ENCODE measurements at regions of chr7 and their contacts with region 1.

Region 1: GRCh38 chr7:98841179-98841997 is 28.4 kb downstream of the TMEM130 start:
- DNase-seq: peak; percentile 23
- H3K4me3 ChIP-seq: no peak overlapping the region
- H3K27ac ChIP-seq: no peak overlapping the region
- H3K4me1 ChIP-seq: no peaks in the 10 kb centered on the region
- H3K27me3 ChIP-seq: no peaks in the 10 kb centered on the region
- CTCF ChIP-seq: peak; percentile 96

Region 2: DNA sequence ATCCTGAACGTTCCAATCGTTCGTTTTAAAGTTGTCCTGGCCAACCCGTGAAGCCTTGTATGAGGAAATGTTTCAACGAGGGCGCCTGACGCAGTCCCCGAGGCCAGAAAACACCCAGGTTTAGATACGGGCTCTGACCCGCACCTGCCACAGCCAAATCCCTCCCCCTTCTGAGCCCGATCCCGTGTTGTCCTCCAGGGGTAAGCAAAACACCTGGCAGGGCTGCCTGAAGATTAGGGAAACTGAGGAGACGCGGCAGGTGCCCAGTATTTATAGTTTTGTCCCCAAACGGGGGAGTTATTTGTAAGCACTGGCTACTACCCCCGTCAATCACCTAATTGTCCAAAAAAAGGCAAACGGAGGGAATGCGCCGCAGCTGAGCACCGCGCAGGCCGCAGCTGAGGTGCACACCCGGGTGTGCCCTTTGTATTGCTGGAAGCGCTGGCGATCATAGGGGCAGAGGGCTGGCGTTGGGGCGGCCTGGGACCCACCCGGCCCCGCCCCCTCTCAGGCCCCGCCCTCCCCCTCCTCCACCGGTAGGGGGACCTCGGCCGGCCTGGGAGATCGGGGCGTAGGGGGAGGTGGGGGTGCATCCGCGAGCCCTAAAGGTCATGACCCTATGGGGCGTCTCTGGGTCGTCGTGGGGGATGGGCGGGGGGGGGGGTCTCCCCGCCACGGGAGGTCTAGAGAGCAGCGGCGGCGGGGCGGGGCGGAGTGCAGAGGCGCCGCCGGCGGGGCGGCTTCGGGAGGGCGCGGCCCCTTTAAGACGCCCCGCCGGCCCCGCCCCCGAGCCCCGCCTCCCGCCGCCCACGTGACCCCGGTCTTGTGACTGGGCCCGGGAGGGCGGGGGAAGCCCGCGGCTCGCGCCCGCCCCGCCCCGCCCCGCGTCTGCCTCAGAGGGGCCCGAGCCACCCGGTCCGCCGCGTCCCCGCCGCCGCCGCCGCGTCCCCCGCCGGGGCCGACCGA is 560.3 kb before region 1 on chr7 and contains the start of gene BRI3:
- CTCF ChIA-PET with region 1: no interaction called
- dilution Hi-C with region 1: no loop called
- in situ Hi-C with region 1: loop called (anchors 25 kb)
- intact Hi-C with region 1: no loop called
- DNase-seq: peak; percentile 78
- H3K4me3 ChIP-seq: peak within 1 kb of the TSS; percentile 68 to 81 (median 77)
- H3K27ac ChIP-seq: peak within 1 kb of the TSS; percentile 67
- H3K4me1 ChIP-seq: peaks cover 45% of the 10 kb centered on the region
- H3K27me3 ChIP-seq: no peaks in the 10 kb centered on the region
- CTCF ChIP-seq: no peak
- total RNA-seq, gene BRI3: 24.5 to 158 TPM

Region 3: DNA sequence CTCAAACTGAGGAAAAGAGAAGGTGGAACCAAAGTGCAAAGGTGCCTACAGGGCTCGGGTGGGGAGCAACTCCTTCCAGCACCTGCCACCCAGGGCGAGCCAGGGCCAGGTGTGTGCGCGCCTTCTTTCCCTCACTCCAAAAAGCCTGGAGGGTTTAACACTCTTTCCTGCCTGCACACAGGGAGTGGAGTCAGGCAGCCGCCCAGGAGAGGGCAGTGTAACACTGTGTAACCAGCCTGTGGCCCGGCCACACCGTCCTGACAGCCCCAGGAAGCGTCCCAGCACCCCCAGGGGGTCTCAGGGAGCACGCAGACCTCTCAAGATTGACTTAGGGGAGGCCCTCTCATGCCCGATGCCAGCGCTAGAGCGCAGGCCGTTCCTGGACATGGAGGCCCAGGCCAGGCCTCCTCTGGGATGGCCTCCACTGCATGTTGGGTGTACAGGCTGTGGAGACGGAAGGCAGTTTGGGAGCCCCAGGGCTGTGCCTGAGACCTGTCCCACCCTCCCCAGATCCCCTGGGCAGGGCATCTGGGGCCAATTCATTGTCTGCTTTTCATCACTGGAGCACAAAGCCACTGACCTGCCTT is 546.5 kb before region 1 on chr7:
- CTCF ChIA-PET with region 1: no interaction called
- dilution Hi-C with region 1: no loop called
- in situ Hi-C with region 1: loop called (anchors 25 kb)
- intact Hi-C with region 1: loop called (anchors 2 kb)
- DNase-seq: peak; percentile 54
- H3K4me3 ChIP-seq: no peak overlapping the region
- H3K27ac ChIP-seq: no peak overlapping the region
- H3K4me1 ChIP-seq: no peaks in the 10 kb centered on the region
- H3K27me3 ChIP-seq: no peaks in the 10 kb centered on the region
- CTCF ChIP-seq: peak; percentile 61 to 77

Region 4: GRCh38 chr7:98420966-98421612 is 420.3 kb before region 1 on chr7:
- CTCF ChIA-PET with region 1: no interaction called
- dilution Hi-C with region 1: no loop called
- in situ Hi-C with region 1: loop called in 1 of 2 experiments (anchors 5 kb)
- intact Hi-C with region 1: loop called (anchors 1 kb)
- DNase-seq: peak; percentile 75
- H3K4me3 ChIP-seq: no peak overlapping the region
- H3K27ac ChIP-seq: no peak overlapping the region
- H3K4me1 ChIP-seq: peaks cover 31% of the 10 kb centered on the region
- H3K27me3 ChIP-seq: no peaks in the 10 kb centered on the region
- CTCF ChIP-seq: peak; percentile 99 to 100

Region 5: DNA sequence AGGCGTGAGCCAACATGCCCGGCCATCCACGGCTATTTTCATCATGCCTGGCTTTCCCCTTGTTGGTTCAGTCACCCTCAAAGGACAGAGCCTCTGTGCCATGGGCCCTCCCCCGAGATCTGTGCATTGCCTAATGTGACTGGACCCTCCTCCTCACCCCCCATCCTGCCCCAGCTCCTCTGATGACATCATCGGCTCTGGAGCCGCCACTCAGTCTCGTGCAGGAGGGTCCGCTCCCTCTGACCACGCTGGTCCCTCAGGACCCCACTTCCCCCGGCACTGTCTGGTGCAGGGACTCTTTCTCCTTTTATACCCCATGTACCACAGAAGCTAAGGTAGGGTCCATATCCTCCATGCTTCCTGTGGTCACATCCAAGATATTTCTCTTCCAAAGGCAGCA is 407.3 kb before region 1 on chr7:
- CTCF ChIA-PET with region 1: no interaction called
- dilution Hi-C with region 1: loop called (anchors 5 kb)
- in situ Hi-C with region 1: loop called in 1 of 2 experiments (anchors 5 kb)
- intact Hi-C with region 1: loop called (anchors 1 kb)
- DNase-seq: no peak
- H3K4me3 ChIP-seq: no peak overlapping the region
- H3K27ac ChIP-seq: no peak overlapping the region
- H3K4me1 ChIP-seq: no peaks in the 10 kb centered on the region
- H3K27me3 ChIP-seq: peaks cover 3% of the 10 kb centered on the region
- CTCF ChIP-seq: no peak

Region 6: DNA sequence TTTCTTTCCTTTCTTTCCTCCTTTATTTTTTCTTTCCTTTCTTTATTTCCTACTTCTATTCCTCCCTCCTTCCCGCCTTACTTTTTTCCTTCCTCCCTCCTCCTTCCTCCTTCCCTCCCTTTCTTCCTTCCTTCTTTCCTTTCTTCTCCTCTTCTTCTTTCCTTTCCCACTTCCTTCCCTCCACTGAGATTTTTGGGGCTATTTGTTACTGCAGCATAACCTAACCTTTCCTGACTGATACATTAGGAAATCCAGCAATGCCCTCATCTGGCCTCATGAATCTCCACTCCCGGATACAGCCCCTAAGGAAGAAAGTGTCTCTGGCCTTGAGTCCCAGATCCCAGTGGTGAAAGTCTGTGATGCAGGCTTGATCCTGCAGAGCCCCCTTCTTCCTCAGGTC is 401.9 kb before region 1 on chr7:
- CTCF ChIA-PET with region 1: no interaction called
- dilution Hi-C with region 1: loop called (anchors 5 kb)
- in situ Hi-C with region 1: loop called in 1 of 2 experiments (anchors 5 kb)
- intact Hi-C with region 1: no loop called
- DNase-seq: no peak
- H3K4me3 ChIP-seq: no peak overlapping the region
- H3K27ac ChIP-seq: no peak overlapping the region
- H3K4me1 ChIP-seq: no peaks in the 10 kb centered on the region
- H3K27me3 ChIP-seq: peaks cover 3% of the 10 kb centered on the region
- CTCF ChIP-seq: no peak

Region 7: DNA sequence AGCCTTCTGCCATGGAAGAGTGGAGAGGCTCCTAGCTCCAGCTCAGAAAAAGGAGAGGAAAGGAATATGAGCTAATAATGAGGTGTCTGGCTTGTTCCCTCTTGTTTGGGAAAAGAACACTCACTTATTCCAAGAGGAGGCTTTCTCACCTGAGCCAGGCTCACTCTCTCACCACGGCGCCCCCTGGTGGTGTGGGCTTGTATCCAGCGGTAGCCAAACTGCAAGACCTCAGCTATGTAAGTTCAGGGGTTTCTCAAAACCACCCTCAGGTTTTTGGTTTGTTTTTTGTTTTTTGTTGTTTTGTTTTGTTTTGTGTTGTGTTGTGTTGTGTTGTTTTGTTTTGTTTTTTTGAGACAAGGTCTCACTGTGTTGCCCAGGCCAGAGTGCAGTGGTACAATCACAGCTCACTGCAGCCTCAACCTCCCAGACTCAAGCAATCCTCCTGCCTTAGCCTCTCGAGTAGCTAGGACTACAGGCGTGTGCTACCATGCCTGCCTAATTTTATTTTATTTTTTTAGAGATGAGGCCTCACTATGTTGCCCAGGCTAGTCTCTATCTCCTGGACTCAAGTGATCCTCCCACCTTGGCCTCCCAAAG is 95.6 kb before region 1 on chr7:
- CTCF ChIA-PET with region 1: no interaction called
- dilution Hi-C with region 1: no loop called
- in situ Hi-C with region 1: no loop called
- intact Hi-C with region 1: loop called (anchors 5 kb)
- DNase-seq: peak; percentile 61
- H3K4me3 ChIP-seq: no peak overlapping the region
- H3K27ac ChIP-seq: no peak overlapping the region
- H3K4me1 ChIP-seq: no peaks in the 10 kb centered on the region
- H3K27me3 ChIP-seq: no peaks in the 10 kb centered on the region
- CTCF ChIP-seq: peak; percentile 82 to 85

Region 8: GRCh38 chr7:98913612-98914011 is 72.2 kb after region 1 on chr7:
- CTCF ChIA-PET with region 1: no interaction called
- dilution Hi-C with region 1: no loop called
- in situ Hi-C with region 1: no loop called
- intact Hi-C with region 1: no loop called
- DNase-seq: no peak
- H3K4me3 ChIP-seq: no peak overlapping the region
- H3K27ac ChIP-seq: no peak overlapping the region
- H3K4me1 ChIP-seq: no peaks in the 10 kb centered on the region
- H3K27me3 ChIP-seq: no peaks in the 10 kb centered on the region
- CTCF ChIP-seq: no peak

Measured in mammary epithelial cell (primary cell).